ENCODE measurements at regions of chr12 and their contacts with region 1.

Region 1: DNA sequence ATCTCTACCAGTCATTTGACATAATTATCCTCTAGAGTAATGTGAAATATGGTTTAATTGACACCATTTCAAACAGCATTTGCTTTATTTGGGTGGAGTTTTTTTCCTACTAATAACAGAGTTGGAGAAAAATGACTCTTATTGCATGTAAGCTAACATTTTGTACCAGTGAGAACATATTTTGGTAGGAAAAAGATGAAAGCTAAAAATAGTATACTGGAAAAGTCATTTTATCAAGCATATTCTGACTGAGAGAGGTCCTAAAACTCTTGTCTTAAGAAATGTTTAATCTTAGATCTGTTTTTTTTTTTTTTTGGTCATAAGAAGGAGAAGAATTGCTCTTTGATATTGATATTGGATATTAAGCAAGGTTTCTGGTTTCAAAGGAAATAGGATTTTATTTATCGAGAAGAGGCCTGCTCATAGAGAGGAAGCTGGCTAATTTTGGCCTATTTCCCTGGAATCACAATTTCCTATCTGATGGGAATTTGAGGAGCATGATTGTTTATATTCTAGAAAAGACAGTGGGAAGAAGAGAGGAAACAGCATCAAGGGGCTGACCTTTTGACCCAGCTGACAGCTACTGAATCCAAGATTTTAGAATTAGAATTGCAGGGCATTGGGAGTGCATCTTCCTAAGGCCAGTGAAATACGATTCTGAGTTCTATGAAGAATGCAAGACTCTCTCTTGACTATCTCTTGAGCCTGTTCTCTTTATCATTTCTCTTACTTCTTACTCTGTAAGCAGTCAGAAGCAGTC is 19.4 kb downstream of the OTOGL start:
- DNase-seq: no peak
- H3K4me3 ChIP-seq: no peak overlapping the region
- H3K4me3 Mint-ChIP-seq: no peak overlapping the region
- H3K27ac ChIP-seq: no peak overlapping the region
- H3K27ac Mint-ChIP-seq: no peak overlapping the region
- H3K4me1 ChIP-seq: no peaks in the 10 kb centered on the region
- H3K4me1 Mint-ChIP-seq: no peaks in the 10 kb centered on the region
- H3K27me3 ChIP-seq: no peaks in the 10 kb centered on the region
- H3K27me3 Mint-ChIP-seq: peaks cover 2 to 7% of the 10 kb centered on the region in 2 donors

Region 2: GRCh38 chr12:80087486-80088213 is 31.1 kb before region 1 on chr12:
- CTCF ChIA-PET with region 1: no interaction called
- POLR2A ChIA-PET with region 1: no interaction called
- intact Hi-C with region 1: loop called (anchors 5 kb)
- DNase-seq: no peak
- H3K4me3 ChIP-seq: no peak overlapping the region
- H3K4me3 Mint-ChIP-seq: no peak overlapping the region
- H3K27ac ChIP-seq: no peak overlapping the region
- H3K27ac Mint-ChIP-seq: no peak overlapping the region
- H3K4me1 ChIP-seq: peaks cover 19% of the 10 kb centered on the region
- H3K4me1 Mint-ChIP-seq: peaks cover 13 to 20% (median 18%) of the 10 kb centered on the region in 4 donors
- H3K27me3 ChIP-seq: no peaks in the 10 kb centered on the region
- H3K27me3 Mint-ChIP-seq: no peaks in the 10 kb centered on the region

Region 3: GRCh38 chr12:80129895-80130530 is 11.3 kb after region 1 on chr12:
- CTCF ChIA-PET with region 1: no interaction called
- POLR2A ChIA-PET with region 1: no interaction called
- intact Hi-C with region 1: no loop called
- DNase-seq: no peak
- H3K4me3 ChIP-seq: no peak overlapping the region
- H3K4me3 Mint-ChIP-seq: no peak overlapping the region
- H3K27ac ChIP-seq: no peak overlapping the region
- H3K27ac Mint-ChIP-seq: no peak overlapping the region
- H3K4me1 ChIP-seq: no peaks in the 10 kb centered on the region
- H3K4me1 Mint-ChIP-seq: no peaks in the 10 kb centered on the region
- H3K27me3 ChIP-seq: no peaks in the 10 kb centered on the region
- H3K27me3 Mint-ChIP-seq: peaks cover 1 to 6% of the 10 kb centered on the region in 2 donors

Region 4: DNA sequence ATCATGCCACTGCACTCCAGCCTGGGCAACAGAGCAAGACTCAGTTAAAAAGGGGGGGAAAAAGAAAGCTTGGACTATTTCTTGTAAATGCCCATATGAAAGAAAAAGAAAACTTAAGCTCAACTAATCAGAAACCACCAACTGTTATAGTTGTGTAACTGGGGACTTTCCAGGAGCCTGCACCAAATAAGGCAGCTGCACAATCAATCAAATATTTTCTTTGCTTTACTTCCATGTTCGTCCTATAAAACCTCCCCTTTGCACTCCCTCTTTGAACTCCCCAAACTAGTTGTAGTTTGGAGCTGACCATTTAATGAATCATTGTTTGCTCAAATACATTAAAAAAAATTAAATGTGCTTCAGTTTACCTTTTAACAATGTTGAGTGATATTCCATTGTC is 35.5 kb after region 1 on chr12:
- CTCF ChIA-PET with region 1: no interaction called
- POLR2A ChIA-PET with region 1: no interaction called
- intact Hi-C with region 1: loop called (anchors 5 kb)
- DNase-seq: no peak
- H3K4me3 ChIP-seq: no peak overlapping the region
- H3K4me3 Mint-ChIP-seq: no peak overlapping the region
- H3K27ac ChIP-seq: no peak overlapping the region
- H3K27ac Mint-ChIP-seq: no peak overlapping the region
- H3K4me1 ChIP-seq: no peaks in the 10 kb centered on the region
- H3K4me1 Mint-ChIP-seq: peaks cover 0 to 4% (median 3%) of the 10 kb centered on the region in 4 donors
- H3K27me3 ChIP-seq: no peaks in the 10 kb centered on the region
- H3K27me3 Mint-ChIP-seq: peaks cover 2% of the 10 kb centered on the region in 2 donors

Region 5: DNA sequence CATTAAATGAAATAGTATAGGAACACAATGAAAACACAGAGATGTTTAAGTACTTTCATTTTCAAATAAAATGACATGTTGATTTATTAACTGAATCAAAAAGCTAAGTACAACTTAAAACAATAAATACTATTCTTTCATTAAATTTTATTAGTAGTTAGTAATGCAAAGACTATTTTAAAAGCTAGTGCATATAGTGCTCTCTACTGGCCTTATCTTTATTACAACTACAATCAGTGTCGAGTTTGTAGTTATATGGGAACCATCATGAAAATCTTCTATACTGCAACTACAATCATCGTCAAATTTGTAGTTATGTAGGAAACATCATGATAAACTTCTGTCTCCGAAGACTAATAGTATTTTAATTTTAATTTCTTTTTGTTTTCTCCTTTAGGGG is 827.8 kb after region 1 on chr12:
- CTCF ChIA-PET with region 1: no interaction called
- POLR2A ChIA-PET with region 1: no interaction called
- intact Hi-C with region 1: no loop called
- DNase-seq: no peak
- H3K4me3 ChIP-seq: no peak overlapping the region
- H3K4me3 Mint-ChIP-seq: no peak overlapping the region
- H3K27ac ChIP-seq: no peak overlapping the region
- H3K27ac Mint-ChIP-seq: no peak overlapping the region
- H3K4me1 ChIP-seq: no peaks in the 10 kb centered on the region
- H3K4me1 Mint-ChIP-seq: no peaks in the 10 kb centered on the region
- H3K27me3 ChIP-seq: no peaks in the 10 kb centered on the region
- H3K27me3 Mint-ChIP-seq: no peaks in the 10 kb centered on the region